ENCODE measurements at regions of chr10 and their contacts with region 1.

Region 1: GRCh38 chr10:68096913-68097503 is 12.3 kb upstream of the MYPN start:
- DNase-seq: peak; percentile 80
- ATAC-seq: peak; percentile 74
- H3K4me3 ChIP-seq: no peak overlapping the region; a peak in 1 of 4 replicates
- H3K27ac ChIP-seq: peak overlapping the region; percentile 69; the same call in 1 of the 2 replicates
- H3K4me1 ChIP-seq: peaks cover 55 to 91% of the 10 kb centered on the region in 2 experiments
- H3K27me3 ChIP-seq: no peaks in the 10 kb centered on the region
- CTCF ChIP-seq: no peak
- POLR2A ChIP-seq: no peak
- RAD21 ChIP-seq: no peak

Region 2: GRCh38 chr10:68135922-68136718 is 39.1 kb after region 1 on chr10:
- CTCF ChIA-PET with region 1: no interaction called
- POLR2A ChIA-PET with region 1: no interaction called
- RAD21 ChIA-PET with region 1: no interaction called
- intact Hi-C with region 1: loop called (anchors 2 kb)
- DNase-seq: peak; percentile 86
- ATAC-seq: peak; percentile 92
- H3K4me3 ChIP-seq: peak overlapping the region in 1 of 2 experiments; percentile 49; a peak in 2 of 4 replicates
- H3K27ac ChIP-seq: peak overlapping the region; percentile 57
- H3K4me1 ChIP-seq: peaks cover 23 to 53% of the 10 kb centered on the region in 2 experiments
- H3K27me3 ChIP-seq: no peaks in the 10 kb centered on the region
- CTCF ChIP-seq: no peak
- POLR2A ChIP-seq: no peak
- RAD21 ChIP-seq: peak; percentile 4; the same call in 1 of the 2 replicates

Measured in HCT116 (cell line).